Uterus (tissue), 4 donors: ENCODE measurements at regions of chr16 and their contacts with region 1.

Region 1: DNA sequence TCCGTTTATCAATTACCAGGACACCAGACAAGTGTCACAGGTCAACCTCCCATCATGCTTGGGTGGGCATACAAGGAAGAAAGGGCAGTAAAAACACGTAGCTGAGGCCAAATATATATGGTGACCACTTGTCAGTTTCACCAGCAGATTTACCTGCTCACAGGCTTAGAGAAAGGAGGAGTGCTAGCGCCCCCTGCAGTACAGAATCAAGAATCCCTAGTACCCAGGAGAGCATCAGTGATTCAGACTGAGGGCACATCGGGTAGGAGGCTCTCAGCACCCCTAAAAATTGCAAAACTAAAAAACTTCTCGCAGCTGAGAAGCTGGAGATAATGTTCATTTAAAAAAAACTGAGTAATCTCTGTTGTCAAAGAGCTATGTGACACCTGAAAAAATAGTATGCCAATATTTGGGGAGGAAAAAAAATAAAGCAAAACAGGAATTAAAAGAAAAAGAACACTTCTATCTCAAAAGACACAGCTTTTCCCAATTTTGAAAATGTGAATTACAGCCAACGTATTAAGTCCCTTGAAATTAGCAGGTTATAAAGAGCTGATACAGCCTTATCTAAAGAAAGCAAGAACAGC is 21.2 kb upstream of the MON1B start:
- DNase-seq: no peak
- H3K4me3 ChIP-seq: no peak overlapping the region
- H3K27ac ChIP-seq: no peak overlapping the region
- H3K4me1 ChIP-seq: no peaks in the 10 kb centered on the region
- H3K27me3 ChIP-seq: no peaks in the 10 kb centered on the region
- CTCF ChIP-seq: no peak
- POLR2A ChIP-seq: no peak

Region 2: GRCh38 chr16:75794426-75794825 is 1375.3 kb before region 1 on chr16:
- intact Hi-C with region 1: loop called (anchors 5 kb)
- DNase-seq: no peak
- H3K4me3 ChIP-seq: no peak overlapping the region
- H3K27ac ChIP-seq: no peak overlapping the region
- H3K4me1 ChIP-seq: no peaks in the 10 kb centered on the region
- H3K27me3 ChIP-seq: no peaks in the 10 kb centered on the region
- CTCF ChIP-seq: no peak
- POLR2A ChIP-seq: no peak